H1 (cell line): ENCODE measurements at regions of chr9 and their contacts with region 1.

Region 1: GRCh38 chr9:128607642-128608350 is 48.9 kb downstream of the DYNC2I2 start:
- DNase-seq: no peak
- H3K4me3 ChIP-seq: no peak overlapping the region
- H3K27ac ChIP-seq: no peak overlapping the region
- H3K4me1 ChIP-seq: no peaks in the 10 kb centered on the region
- H3K27me3 ChIP-seq: no peaks in the 10 kb centered on the region
- CTCF ChIP-seq: no peak
- EP300 ChIP-seq: no peak
- POLR2A ChIP-seq: no peak
- RAD21 ChIP-seq: no peak

Region 2: DNA sequence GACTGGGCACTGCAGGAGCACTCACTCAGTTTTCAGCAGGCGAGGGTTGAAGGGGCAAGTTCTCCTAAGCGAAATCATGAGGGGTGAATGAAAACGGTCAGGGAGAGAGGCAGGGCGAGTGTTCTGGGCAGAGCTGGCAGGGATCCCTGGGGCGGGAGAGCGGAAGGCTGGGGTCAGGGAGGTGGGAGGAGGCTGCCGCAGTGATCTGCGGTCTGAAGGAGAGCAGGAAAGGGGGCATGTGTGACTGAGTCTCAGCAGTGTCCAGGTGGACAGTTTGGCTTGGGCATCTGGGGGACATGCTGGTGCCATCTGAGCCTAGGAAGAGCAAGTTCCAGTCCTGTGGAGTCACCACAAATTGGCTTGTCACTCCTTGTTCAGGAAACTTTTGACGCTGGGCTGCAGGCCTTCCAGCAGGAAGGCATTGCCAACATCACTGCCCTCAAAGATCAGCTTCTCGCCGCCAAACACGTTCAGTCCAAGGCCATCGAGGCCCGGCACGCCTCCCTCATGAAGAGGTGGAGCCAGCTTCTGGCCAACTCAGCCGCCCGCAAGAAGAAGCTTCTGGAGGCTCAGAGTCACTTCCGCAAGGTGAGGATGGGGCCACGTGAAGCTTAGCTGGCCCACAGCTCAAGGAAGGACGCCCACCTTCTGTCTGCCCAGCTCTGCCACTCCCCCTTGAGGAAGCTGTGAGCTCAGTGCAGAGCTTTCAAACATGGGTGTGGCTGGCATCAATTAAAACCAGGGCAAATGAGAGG is 17.8 kb after region 1 on chr9:
- CTCF ChIA-PET with region 1: interaction called, 10 read pairs
- POLR2A ChIA-PET with region 1: interaction called, 3 read pairs
- DNase-seq: no peak
- H3K4me3 ChIP-seq: no peak overlapping the region
- H3K27ac ChIP-seq: no peak overlapping the region
- H3K4me1 ChIP-seq: no peaks in the 10 kb centered on the region
- H3K27me3 ChIP-seq: no peaks in the 10 kb centered on the region
- CTCF ChIP-seq: peak; percentile 11 to 31 (median 14); a peak in 3 of 4 replicates
- EP300 ChIP-seq: no peak
- POLR2A ChIP-seq: no peak
- RAD21 ChIP-seq: peak in 1 of 2 experiments; percentile 38; a peak in 2 of 4 replicates

Region 3: GRCh38 chr9:128771745-128772519 is 164.1 kb after region 1 on chr9 and contains the start of gene ZER1:
- CTCF ChIA-PET with region 1: no interaction called
- POLR2A ChIA-PET with region 1: no interaction called
- DNase-seq: peak; percentile 53 to 97
- H3K4me3 ChIP-seq: peak within 1 kb of the TSS; percentile 75 to 97 (median 90)
- H3K27ac ChIP-seq: peak within 1 kb of the TSS; percentile 85
- H3K4me1 ChIP-seq: peaks cover 0 to 3% (median 1%) of the 10 kb centered on the region in 4 experiments; a peak in 3 of 7 replicates
- H3K27me3 ChIP-seq: no peaks in the 10 kb centered on the region
- CTCF ChIP-seq: no peak
- EP300 ChIP-seq: peak in 1 of 2 experiments; percentile 87; a peak in 1 of 3 replicates
- POLR2A ChIP-seq: peak in 1 of 2 experiments; percentile 79; a peak in 2 of 3 replicates
- RAD21 ChIP-seq: peak in 1 of 2 experiments; percentile 7; a peak in 1 of 4 replicates
- total RNA-seq, gene ZER1: 20.5 and 22.6 TPM in 2 replicates